ENCODE measurements at regions of chr16 and their contacts with region 1.

Region 1: DNA sequence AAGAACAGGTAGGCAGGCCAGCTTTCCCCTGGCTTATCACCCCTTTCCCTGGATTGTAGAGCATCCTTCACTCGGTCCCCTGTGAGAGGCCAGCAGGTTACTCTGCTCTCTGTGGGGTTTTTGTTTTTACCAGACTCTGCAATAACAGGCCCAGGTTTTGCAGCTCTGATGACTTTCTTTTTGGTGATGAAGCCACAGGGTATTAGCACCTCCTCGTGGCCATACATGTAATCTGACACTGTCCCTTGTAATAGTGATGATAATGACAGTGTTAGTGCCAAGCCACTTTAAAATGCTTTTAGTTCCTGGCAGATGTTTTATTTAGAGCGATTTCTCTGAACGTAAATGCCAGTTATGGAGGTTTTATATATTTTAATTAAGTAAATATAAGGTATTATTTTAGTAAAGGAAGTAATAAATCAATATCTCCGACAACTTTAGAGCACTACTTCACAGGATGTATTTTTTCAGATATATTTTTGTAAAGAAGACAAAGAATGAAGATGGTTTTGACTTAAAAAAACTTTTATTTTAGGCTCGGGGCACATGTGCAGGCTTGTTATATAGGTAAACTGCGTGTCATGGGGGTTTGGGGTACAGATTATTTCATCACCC is 38.0 kb upstream of the CPHXL start:
- DNase-seq: peak; percentile 67
- CTCF ChIP-seq: peak; percentile 82

Region 2: GRCh38 chr16:75218256-75219070 is 545.8 kb before region 1 on chr16 and contains the start of gene CTRB1:
- in situ Hi-C with region 1: loop called (anchors 25 kb)
- DNase-seq: peak; percentile 66
- CTCF ChIP-seq: no peak

Region 3: DNA sequence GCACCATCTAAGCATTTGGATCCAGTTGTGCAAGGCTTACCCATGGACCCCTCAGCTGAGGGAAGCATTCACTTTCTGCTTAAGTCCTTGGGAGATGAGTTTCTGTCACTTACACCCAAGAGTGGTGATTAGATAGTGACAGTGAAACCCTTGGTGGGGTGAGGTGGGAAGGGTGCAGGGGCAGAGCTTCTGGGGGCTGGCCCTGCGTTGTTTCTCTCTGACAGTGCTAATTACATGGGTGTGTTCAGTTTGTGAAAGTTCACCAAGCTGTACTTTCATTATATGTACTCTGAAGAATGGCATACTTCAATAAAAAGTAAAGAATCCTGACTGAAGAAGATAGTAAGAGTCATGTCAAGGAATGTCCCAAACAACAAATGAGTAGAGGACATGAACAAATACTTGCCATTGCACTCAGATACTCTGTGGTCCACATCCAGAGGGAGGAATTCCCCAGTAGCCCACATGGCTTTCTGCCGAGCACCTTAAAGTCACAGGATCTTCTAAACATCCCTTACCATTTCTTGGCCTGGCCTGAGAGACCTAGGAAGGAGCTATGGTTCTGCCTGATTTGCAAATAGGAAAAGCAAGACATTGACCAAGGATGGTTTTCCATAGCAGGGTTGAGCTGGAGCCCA is 277.5 kb before region 1 on chr16:
- in situ Hi-C with region 1: loop called (anchors 10 kb)
- DNase-seq: peak; percentile 61
- CTCF ChIP-seq: no peak

Region 4: GRCh38 chr16:75647492-75648264 is 116.6 kb before region 1 on chr16 and contains the starts of genes KARS1 and TERF2IP:
- in situ Hi-C with region 1: loop called (anchors 10 kb)
- DNase-seq: peak; percentile 97
- CTCF ChIP-seq: no peak

Measured in GM13976 (cell line).